ENCODE measurements at regions of chr1 and their contacts with region 1.

Region 1: GRCh38 chr1:52444463-52444862 is 40.1 kb downstream of the PRPF38A start:
- DNase-seq: peak; percentile 29
- H3K4me3 ChIP-seq: no peak overlapping the region
- H3K27ac ChIP-seq: no peak overlapping the region
- H3K4me1 ChIP-seq: no peaks in the 10 kb centered on the region
- H3K27me3 ChIP-seq: no peaks in the 10 kb centered on the region
- CTCF ChIP-seq: no peak

Region 2: GRCh38 chr1:52056163-52056936 is 388.1 kb before region 1 on chr1 and contains the start of gene BTF3L4:
- CTCF ChIA-PET with region 1: no interaction called
- POLR2A ChIA-PET with region 1: interaction called, 15 read pairs
- intact Hi-C with region 1: no loop called
- DNase-seq: peak; percentile 98
- H3K4me3 ChIP-seq: peak within 1 kb of the TSS; percentile 80
- H3K27ac ChIP-seq: peak within 1 kb of the TSS; percentile 92
- H3K4me1 ChIP-seq: peaks cover 30% of the 10 kb centered on the region
- H3K27me3 ChIP-seq: no peaks in the 10 kb centered on the region
- CTCF ChIP-seq: no peak
- total RNA-seq, gene BTF3L4: 84.4 and 87.0 TPM in 2 replicates

Measured in A673 (cell line).